ENCODE measurements at regions of chr14 and their contacts with region 1.

Region 1: GRCh38 chr14:24978862-24979724 is 70.9 kb downstream of the STXBP6 start:
- DNase-seq: peak; percentile 38 to 61
- H3K4me3 ChIP-seq: no peak overlapping the region
- H3K4me3 Mint-ChIP-seq: peak overlapping the region; percentile 54
- H3K27ac Mint-ChIP-seq: peak overlapping the region; percentile 78
- H3K4me1 ChIP-seq: peaks cover 74% of the 10 kb centered on the region
- H3K4me1 Mint-ChIP-seq: peaks cover 55% of the 10 kb centered on the region
- H3K27me3 ChIP-seq: no peaks in the 10 kb centered on the region
- H3K27me3 Mint-ChIP-seq: no peaks in the 10 kb centered on the region
- CTCF ChIP-seq: no peak

Region 2: DNA sequence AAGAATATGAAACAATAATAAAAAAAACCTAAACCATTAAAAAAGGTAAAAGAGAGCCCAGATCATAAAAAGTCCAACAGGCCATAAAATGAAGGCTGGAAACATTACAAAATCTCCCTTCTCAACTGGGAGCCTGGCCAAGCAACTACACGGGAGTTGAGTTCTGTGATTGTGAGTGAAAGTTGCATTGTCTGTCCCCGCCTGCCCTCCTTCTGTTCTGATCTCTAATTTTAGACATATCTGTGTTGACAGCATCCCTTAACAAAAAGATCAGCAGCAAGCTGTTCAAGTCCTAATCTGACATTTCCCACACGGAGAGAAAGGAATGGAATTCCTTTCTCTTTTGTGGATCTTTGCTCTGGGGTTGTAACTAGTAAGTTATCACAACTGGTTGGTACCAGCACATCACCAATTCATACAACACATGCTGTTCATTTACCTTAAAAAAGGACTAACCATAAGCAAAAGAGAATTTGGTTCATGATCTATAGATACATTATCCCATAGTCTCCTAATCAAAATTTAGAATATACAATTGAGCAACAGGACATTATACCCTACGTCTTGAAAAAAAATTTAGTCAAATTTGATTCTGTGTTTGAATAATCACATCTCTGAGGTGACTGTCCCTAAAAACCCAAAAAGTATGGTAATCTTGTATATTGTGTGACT is 140.0 kb before region 1 on chr14:
- CTCF ChIA-PET with region 1: no interaction called
- POLR2A ChIA-PET with region 1: no interaction called
- intact Hi-C with region 1: loop called (anchors 1 kb)
- DNase-seq: peak in 1 of 2 experiments; percentile 36
- H3K4me3 ChIP-seq: no peak overlapping the region
- H3K4me3 Mint-ChIP-seq: peak overlapping the region; percentile 49
- H3K27ac Mint-ChIP-seq: peak overlapping the region; percentile 82
- H3K4me1 ChIP-seq: peaks cover 61% of the 10 kb centered on the region
- H3K4me1 Mint-ChIP-seq: peaks cover 36% of the 10 kb centered on the region
- H3K27me3 ChIP-seq: no peaks in the 10 kb centered on the region
- H3K27me3 Mint-ChIP-seq: no peaks in the 10 kb centered on the region
- CTCF ChIP-seq: no peak

Region 3: GRCh38 chr14:24887623-24888293 is 91.3 kb before region 1 on chr14:
- CTCF ChIA-PET with region 1: no interaction called
- POLR2A ChIA-PET with region 1: no interaction called
- intact Hi-C with region 1: loop called (anchors 1 kb)
- DNase-seq: no peak
- H3K4me3 ChIP-seq: no peak overlapping the region
- H3K4me3 Mint-ChIP-seq: no peak overlapping the region
- H3K27ac Mint-ChIP-seq: peak overlapping the region; percentile 70
- H3K4me1 ChIP-seq: peaks cover 42% of the 10 kb centered on the region
- H3K4me1 Mint-ChIP-seq: peaks cover 47% of the 10 kb centered on the region
- H3K27me3 ChIP-seq: no peaks in the 10 kb centered on the region
- H3K27me3 Mint-ChIP-seq: no peaks in the 10 kb centered on the region
- CTCF ChIP-seq: no peak

Region 4: DNA sequence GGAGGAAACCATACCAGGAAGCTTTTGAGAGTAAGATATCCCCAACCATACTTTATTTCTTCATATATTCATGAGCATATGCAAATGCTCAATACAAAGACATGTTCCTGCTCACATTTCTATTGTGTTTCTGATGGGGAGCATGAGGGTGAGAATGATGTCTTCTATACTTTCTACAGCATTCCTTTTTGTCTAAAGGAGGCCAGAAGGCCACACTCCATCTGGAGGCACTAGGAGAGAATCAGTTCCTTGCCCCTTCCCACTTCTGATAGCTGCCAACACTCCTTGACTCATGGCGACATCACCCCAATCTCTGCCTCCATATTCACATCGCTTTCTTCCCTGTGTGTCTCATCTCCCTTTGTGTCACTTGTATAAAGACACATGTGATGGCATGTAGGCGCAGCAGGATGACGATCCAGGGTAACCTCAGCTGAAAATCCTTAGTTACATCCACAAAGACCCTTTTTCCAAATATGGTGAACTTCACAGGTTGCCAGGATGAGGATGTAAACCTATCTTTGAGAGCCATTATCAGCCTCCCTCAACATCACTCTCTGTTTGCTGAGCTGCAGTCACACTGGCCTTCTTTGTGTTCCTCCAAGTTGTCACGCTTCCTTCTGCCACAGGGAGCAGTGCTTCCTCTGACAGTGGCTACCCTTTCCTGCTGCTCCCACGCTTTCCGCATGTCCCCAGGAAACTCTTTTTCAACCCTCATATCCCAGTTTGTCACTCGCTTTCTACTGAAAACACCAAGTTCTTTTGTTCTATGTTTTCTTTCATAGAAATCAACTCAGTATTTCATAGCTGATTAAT is 26.0 kb before region 1 on chr14:
- CTCF ChIA-PET with region 1: no interaction called
- POLR2A ChIA-PET with region 1: no interaction called
- intact Hi-C with region 1: no loop called
- DNase-seq: peak; percentile 55 to 59
- H3K4me3 ChIP-seq: no peak overlapping the region
- H3K4me3 Mint-ChIP-seq: no peak overlapping the region
- H3K27ac Mint-ChIP-seq: no peak overlapping the region
- H3K4me1 ChIP-seq: peaks cover 22% of the 10 kb centered on the region
- H3K4me1 Mint-ChIP-seq: peaks cover 27% of the 10 kb centered on the region
- H3K27me3 ChIP-seq: no peaks in the 10 kb centered on the region
- H3K27me3 Mint-ChIP-seq: no peaks in the 10 kb centered on the region
- CTCF ChIP-seq: peak; percentile 45 to 63

Region 5: DNA sequence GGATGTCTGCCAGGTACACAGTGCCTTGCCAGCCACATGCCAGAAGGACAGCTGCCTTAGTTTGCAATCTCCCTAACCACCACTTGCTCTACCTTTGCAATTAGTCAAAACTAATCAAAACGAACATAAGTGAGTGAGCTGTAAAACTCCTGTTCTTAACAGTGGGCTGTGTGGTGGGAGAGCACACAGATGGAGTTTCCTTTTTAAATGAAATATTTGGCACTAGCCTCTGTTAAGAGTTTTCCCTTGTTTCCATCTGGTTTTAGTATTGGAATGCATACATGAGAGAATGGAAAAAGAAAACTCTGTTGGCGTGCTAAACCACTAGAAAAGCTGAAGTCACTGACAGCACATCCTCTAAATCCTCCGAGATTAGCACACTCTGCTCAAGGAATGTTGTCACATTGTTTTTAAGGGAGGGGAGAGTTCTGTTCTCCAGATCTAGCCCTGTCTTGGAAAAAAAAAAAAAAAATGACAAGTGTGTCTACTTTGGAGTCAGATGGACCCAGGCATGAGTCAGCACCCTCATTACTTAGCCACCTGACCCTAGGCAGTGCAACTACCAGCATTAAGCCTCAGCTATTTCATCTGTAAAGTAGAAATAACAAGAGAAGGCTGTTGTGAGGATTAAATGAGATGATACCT is 13.0 kb before region 1 on chr14:
- CTCF ChIA-PET with region 1: no interaction called
- POLR2A ChIA-PET with region 1: interaction called, 3 read pairs
- intact Hi-C with region 1: loop called (anchors 1 kb)
- DNase-seq: peak; percentile 62
- H3K4me3 ChIP-seq: no peak overlapping the region
- H3K4me3 Mint-ChIP-seq: peak overlapping the region; percentile 40
- H3K27ac Mint-ChIP-seq: peak overlapping the region; percentile 90
- H3K4me1 ChIP-seq: peaks cover 50% of the 10 kb centered on the region
- H3K4me1 Mint-ChIP-seq: peaks cover 31% of the 10 kb centered on the region
- H3K27me3 ChIP-seq: no peaks in the 10 kb centered on the region
- H3K27me3 Mint-ChIP-seq: no peaks in the 10 kb centered on the region
- CTCF ChIP-seq: no peak

Region 6: DNA sequence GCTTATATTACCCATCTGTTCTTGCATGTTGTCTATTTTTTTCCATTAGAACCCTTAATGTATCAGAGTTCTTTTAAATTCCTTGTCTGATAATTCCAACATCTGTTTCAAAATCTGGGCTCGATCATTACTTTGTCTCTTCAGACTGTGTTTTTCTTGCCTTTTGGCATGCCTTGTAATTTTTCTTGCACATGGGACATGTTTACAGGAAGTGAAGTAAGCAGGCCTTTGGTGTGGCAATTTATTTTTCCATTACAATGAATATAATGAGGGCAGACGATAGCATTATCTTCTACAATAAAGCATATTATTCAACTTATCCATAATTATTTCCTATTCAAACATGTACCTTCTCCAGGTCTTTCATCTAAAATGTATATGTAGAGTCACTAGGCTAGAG is 22.5 kb after region 1 on chr14:
- CTCF ChIA-PET with region 1: no interaction called
- POLR2A ChIA-PET with region 1: interaction called, 10 read pairs
- intact Hi-C with region 1: loop called (anchors 2 kb)
- DNase-seq: no peak
- H3K4me3 ChIP-seq: no peak overlapping the region
- H3K4me3 Mint-ChIP-seq: no peak overlapping the region
- H3K27ac Mint-ChIP-seq: peak overlapping the region; percentile 62
- H3K4me1 ChIP-seq: peaks cover 52% of the 10 kb centered on the region
- H3K4me1 Mint-ChIP-seq: peaks cover 37% of the 10 kb centered on the region
- H3K27me3 ChIP-seq: no peaks in the 10 kb centered on the region
- H3K27me3 Mint-ChIP-seq: no peaks in the 10 kb centered on the region
- CTCF ChIP-seq: no peak

Region 7: GRCh38 chr14:25009891-25010290 is 30.8 kb after region 1 on chr14:
- CTCF ChIA-PET with region 1: interaction called, 4 read pairs
- POLR2A ChIA-PET with region 1: interaction called, 3 read pairs
- intact Hi-C with region 1: loop called (anchors 1 kb)
- DNase-seq: peak; percentile 63 to 76
- H3K4me3 ChIP-seq: no peak overlapping the region
- H3K4me3 Mint-ChIP-seq: peak overlapping the region; percentile 70
- H3K27ac Mint-ChIP-seq: peak overlapping the region; percentile 96
- H3K4me1 ChIP-seq: peaks cover 75% of the 10 kb centered on the region
- H3K4me1 Mint-ChIP-seq: peaks cover 49% of the 10 kb centered on the region
- H3K27me3 ChIP-seq: no peaks in the 10 kb centered on the region
- H3K27me3 Mint-ChIP-seq: no peaks in the 10 kb centered on the region
- CTCF ChIP-seq: no peak